HEK293 (cell line): ENCODE measurements at regions of chr12 and their contacts with region 1.

Region 1: DNA sequence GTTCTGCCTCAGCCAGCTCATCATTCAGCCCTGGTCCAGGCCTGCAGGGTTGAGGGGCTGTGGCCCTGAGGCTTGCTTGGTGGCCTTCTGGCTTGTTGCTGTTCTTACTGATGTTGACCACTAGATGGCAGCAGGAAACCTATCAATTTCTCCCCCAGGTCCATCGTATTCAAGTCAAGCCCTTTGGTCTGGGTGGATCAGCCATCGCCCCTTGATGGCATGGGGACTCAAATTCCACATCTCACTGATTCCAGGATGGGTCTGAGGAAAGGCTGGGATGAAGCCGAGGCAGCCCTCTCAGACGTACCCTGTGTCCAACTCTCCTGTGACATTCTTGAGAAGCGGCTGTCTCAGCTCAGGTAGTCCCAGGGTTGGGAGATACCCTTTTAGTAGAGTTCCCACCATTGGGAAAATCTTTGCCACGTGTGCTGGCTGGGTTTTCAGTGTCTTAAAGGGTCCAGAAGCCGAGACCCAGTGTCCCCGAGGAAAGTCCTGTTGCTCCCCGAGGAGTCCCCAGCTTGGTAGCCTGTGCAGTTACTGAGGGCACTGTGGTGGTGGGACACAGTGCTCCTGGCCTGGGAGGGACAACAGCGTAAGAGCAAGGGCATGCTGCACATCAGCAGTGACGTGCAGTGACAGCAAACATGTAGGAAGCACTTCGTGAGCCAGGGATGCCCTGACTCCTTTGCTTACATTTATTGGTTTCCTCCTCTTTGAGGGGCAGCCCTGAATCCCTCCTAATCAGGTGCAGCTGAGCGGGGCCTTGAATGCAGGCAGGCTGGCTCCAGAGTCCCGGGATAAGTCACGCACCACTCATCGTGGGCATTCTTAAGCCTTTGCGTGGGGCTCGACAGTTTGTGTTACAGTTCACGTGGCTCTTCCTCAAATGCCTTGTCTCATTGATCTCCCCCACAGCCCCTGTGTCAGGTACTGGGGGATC is 58.6 kb downstream of the TSPAN9 start:
- H3K4me3 ChIP-seq: no peak overlapping the region
- H3K27ac ChIP-seq: no peak overlapping the region
- H3K4me1 ChIP-seq: no peaks in the 10 kb centered on the region
- CTCF ChIP-seq: peak; percentile 75

Region 2: GRCh38 chr12:3177778-3178425 is 42.1 kb after region 1 on chr12:
- CTCF ChIA-PET with region 1: interaction called, 11 read pairs
- POLR2A ChIA-PET with region 1: no interaction called
- H3K4me3 ChIP-seq: no peak overlapping the region
- H3K27ac ChIP-seq: no peak overlapping the region
- H3K4me1 ChIP-seq: no peaks in the 10 kb centered on the region
- CTCF ChIP-seq: no peak